ENCODE measurements at regions of chr10 and their contacts with region 1.

Region 1: GRCh38 chr10:17643755-17644484 is at the start of gene STAM:
- DNase-seq: peak; percentile 69
- ATAC-seq: peak; percentile 75
- H3K4me3 ChIP-seq: peak within 1 kb of the TSS; percentile 89
- H3K27ac ChIP-seq: peak within 1 kb of the TSS; percentile 88
- H3K4me1 ChIP-seq: peaks cover 20% of the 10 kb centered on the region; the same call in 1 of the 2 replicates
- H3K27me3 ChIP-seq: no peaks in the 10 kb centered on the region
- CTCF ChIP-seq: no peak
- total RNA-seq, gene STAM: 7.8 and 9.5 TPM in 2 replicates

Region 2: GRCh38 chr10:17607060-17607459 is 36.9 kb before region 1 on chr10:
- CTCF ChIA-PET with region 1: no interaction called
- POLR2A ChIA-PET with region 1: no interaction called
- intact Hi-C with region 1: no loop called
- DNase-seq: no peak
- ATAC-seq: no peak
- H3K4me3 ChIP-seq: no peak overlapping the region
- H3K27ac ChIP-seq: no peak overlapping the region
- H3K4me1 ChIP-seq: no peaks in the 10 kb centered on the region
- H3K27me3 ChIP-seq: no peaks in the 10 kb centered on the region
- CTCF ChIP-seq: no peak

Region 3: GRCh38 chr10:17617031-17617911 is 26.6 kb before region 1 on chr10 and contains the start of gene HACD1:
- CTCF ChIA-PET with region 1: no interaction called
- POLR2A ChIA-PET with region 1: interaction called, 14 read pairs
- intact Hi-C with region 1: loop called (anchors 2 kb)
- DNase-seq: peak; percentile 54
- ATAC-seq: peak; percentile 79
- H3K4me3 ChIP-seq: peak within 1 kb of the TSS; percentile 75
- H3K27ac ChIP-seq: 0 out of 2 replicates have a peak within 1 kb of the TSS, but pooled peaks have one; percentile 7
- H3K4me1 ChIP-seq: no peaks in the 10 kb centered on the region
- H3K27me3 ChIP-seq: no peaks in the 10 kb centered on the region
- CTCF ChIP-seq: peak; percentile 24; the same call in 1 of the 2 replicates
- total RNA-seq, gene HACD1: 14.9 and 15.3 TPM in 2 replicates

Region 4: DNA sequence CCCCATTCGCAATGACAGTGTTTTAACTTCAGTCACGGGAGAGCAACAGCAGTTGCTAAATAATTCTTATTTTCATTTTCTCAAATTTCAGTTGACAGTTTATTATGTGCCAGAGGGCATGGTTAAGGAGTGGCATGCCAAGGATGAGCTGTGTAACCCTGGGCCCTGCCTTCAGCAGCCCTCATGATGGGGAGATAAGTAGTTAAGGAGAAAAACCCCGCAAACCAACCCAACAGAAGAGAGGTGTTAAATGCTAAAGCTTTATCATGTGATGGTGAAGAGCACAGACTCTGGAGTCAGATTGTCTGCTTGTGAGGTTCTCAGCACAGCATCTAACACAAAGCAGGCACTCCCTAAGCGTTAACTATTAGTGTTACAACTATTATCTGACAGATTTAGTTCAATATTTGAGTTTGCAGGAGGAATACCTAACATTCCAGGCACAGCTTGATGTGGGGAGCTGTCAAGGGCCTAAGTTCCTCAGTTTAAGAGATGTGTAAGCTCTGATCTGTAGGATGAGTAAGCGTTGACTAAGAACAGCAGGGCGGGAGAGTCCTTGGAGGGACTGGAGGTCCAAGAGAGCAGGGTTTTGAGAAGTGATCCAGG is 29.6 kb after region 1 on chr10:
- CTCF ChIA-PET with region 1: no interaction called
- POLR2A ChIA-PET with region 1: interaction called, 3 read pairs
- intact Hi-C with region 1: loop called (anchors 2 kb)
- DNase-seq: peak; percentile 84
- ATAC-seq: peak; percentile 97
- H3K4me3 ChIP-seq: peak overlapping the region; percentile 45; the same call in 1 of the 2 replicates
- H3K27ac ChIP-seq: peak overlapping the region; percentile 87
- H3K4me1 ChIP-seq: peaks cover 33% of the 10 kb centered on the region
- H3K27me3 ChIP-seq: no peaks in the 10 kb centered on the region
- CTCF ChIP-seq: no peak

Region 5: GRCh38 chr10:17703706-17704105 is 59.8 kb after region 1 on chr10:
- CTCF ChIA-PET with region 1: no interaction called
- POLR2A ChIA-PET with region 1: no interaction called
- intact Hi-C with region 1: loop called (anchors 10 kb)
- DNase-seq: no peak
- ATAC-seq: no peak
- H3K4me3 ChIP-seq: no peak overlapping the region
- H3K27ac ChIP-seq: no peak overlapping the region
- H3K4me1 ChIP-seq: no peaks in the 10 kb centered on the region
- H3K27me3 ChIP-seq: no peaks in the 10 kb centered on the region
- CTCF ChIP-seq: no peak

Measured in PC-3 (cell line).